Heart right ventricle (tissue), 16 donors: ENCODE measurements at regions of chr10 and their contacts with region 1.

Region 1: GRCh38 chr10:77448226-77448625 is 189.4 kb downstream of the KCNMA1 start:
- DNase-seq: no peak
- ATAC-seq: no peak
- H3K4me3 ChIP-seq: no peak overlapping the region
- H3K27ac ChIP-seq: no peak overlapping the region
- H3K4me1 ChIP-seq: no peaks in the 10 kb centered on the region
- H3K27me3 ChIP-seq: peaks cover 0 to 18% (median 7%) of the 10 kb centered on the region in 7 donors
- CTCF ChIP-seq: no peak

Region 2: GRCh38 chr10:77420947-77421523 is 27.2 kb before region 1 on chr10:
- intact Hi-C with region 1: loop called in 1 of 10 experiments (anchors 1 kb)
- DNase-seq: no peak
- ATAC-seq: no peak
- H3K4me3 ChIP-seq: no peak overlapping the region
- H3K27ac ChIP-seq: no peak overlapping the region
- H3K4me1 ChIP-seq: peaks cover 0 to 4% (median 0%) of the 10 kb centered on the region in 9 donors
- H3K27me3 ChIP-seq: peaks cover 0 to 4% (median 0%) of the 10 kb centered on the region in 7 donors
- CTCF ChIP-seq: no peak